ENCODE measurements at regions of chr1 and their contacts with region 1.

Region 1: DNA sequence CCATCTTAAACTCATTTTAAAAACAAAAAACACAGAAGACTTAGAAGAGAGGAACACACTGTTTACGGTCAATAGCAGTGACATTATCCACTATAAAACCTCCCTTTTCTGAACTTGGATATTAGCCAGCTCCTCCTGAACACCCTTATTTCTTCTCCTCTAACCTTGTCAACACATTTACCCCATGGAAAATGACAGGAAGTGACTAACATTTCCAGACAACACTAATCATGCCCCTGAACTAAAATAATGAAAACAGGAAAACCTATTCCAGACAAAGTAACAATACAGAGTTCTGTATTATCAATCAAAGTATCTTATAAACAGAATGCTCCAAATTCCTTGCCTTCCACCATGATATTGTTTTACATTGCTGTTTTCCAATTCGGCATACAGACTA is 45.3 kb downstream of the PALMD start:
- DNase-seq: peak; percentile 98
- H3K4me3 ChIP-seq: no peak overlapping the region
- H3K27ac ChIP-seq: peak overlapping the region; percentile 89
- H3K4me1 ChIP-seq: peaks cover 44% of the 10 kb centered on the region
- H3K27me3 ChIP-seq: no peaks in the 10 kb centered on the region
- CTCF ChIP-seq: no peak
- POLR2A ChIP-seq: peak; percentile 84

Region 2: DNA sequence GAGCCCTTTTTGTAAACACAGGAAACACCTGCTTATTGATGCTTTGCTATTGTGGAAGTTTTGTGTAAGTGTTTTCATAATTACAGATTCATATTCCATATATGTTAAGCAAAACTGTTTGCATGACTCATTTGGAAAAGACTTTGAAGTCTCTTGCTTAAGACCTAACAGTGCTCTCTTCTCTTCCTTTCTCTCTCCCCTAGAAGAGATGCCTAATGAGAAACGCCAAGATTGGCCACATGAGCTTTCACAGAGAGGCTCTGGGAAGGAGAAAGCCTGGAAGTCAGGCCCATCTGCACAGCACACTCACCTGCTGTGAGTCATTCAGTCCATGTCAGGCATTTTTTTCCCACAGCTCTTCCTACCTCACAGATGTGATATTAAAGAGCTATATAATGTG is 146.8 kb before region 1 on chr1:
- CTCF ChIA-PET with region 1: interaction called, 3 read pairs
- POLR2A ChIA-PET with region 1: no interaction called
- dilution Hi-C with region 1: no loop called
- intact Hi-C with region 1: loop called (anchors 5 kb)
- DNase-seq: peak; percentile 87
- H3K4me3 ChIP-seq: no peak overlapping the region
- H3K27ac ChIP-seq: peak overlapping the region; percentile 54
- H3K4me1 ChIP-seq: peaks cover 49% of the 10 kb centered on the region
- H3K27me3 ChIP-seq: no peaks in the 10 kb centered on the region
- CTCF ChIP-seq: no peak
- POLR2A ChIP-seq: no peak

Region 3: DNA sequence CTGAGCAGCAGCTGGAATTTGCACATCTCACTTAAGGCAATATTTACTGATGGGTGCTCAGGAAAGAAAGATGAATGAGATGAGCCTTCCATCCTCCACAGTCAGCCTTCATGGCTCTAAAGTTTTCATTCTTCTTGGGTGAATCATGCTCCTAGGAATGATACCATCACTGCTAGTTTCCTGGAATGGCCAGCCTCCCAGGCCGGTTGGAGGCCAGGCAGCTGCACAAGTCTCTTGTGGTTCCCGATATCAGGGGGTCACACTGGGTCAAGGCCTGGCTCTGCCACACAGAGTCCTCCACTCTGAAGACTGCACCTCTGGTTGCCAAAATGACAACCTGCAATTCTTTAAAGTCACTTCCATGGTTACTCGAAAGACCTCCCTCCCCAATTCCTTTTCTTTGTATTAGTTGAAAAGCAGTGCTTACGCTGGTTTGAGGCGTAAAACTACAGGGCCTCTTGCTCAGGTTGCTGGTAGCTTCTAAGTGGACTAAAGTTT is 91.4 kb before region 1 on chr1:
- CTCF ChIA-PET with region 1: interaction called, 4 read pairs
- POLR2A ChIA-PET with region 1: no interaction called
- dilution Hi-C with region 1: no loop called
- intact Hi-C with region 1: loop called (anchors 1 kb)
- DNase-seq: peak; percentile 97
- H3K4me3 ChIP-seq: no peak overlapping the region
- H3K27ac ChIP-seq: peak overlapping the region; percentile 93
- H3K4me1 ChIP-seq: peaks cover 65% of the 10 kb centered on the region
- H3K27me3 ChIP-seq: no peaks in the 10 kb centered on the region
- CTCF ChIP-seq: no peak
- POLR2A ChIP-seq: no peak

Region 4: DNA sequence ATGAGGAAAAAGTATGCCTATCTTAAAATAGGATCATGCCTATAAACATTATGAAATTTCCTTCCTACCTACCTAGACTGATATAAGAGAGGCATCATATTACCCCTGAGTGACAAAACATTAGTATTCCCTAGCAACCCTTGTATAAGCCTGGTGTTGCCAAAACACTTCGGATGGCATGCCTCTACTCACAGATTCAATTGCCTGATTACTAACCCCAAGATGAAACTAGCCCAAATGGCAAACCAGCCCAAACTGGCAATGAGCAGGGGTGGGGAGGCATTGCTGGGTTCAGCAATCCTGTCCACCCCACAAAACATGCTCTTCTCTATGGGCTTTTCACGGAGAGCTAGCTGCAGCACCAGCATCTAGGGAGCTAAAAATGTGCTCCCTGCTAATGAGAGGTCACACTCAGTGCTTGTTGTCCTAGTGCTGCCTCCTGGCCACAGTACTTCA is 31.4 kb before region 1 on chr1:
- CTCF ChIA-PET with region 1: interaction called, 11 read pairs
- POLR2A ChIA-PET with region 1: interaction called, 3 read pairs
- dilution Hi-C with region 1: no loop called
- intact Hi-C with region 1: loop called (anchors 1 kb)
- DNase-seq: peak; percentile 91
- H3K4me3 ChIP-seq: no peak overlapping the region
- H3K27ac ChIP-seq: peak overlapping the region; percentile 62
- H3K4me1 ChIP-seq: peaks cover 81% of the 10 kb centered on the region
- H3K27me3 ChIP-seq: no peaks in the 10 kb centered on the region
- CTCF ChIP-seq: no peak
- POLR2A ChIP-seq: no peak

Measured in endothelial cell of umbilical vein (primary cell).